ENCODE measurements at regions of chr19 and their contacts with region 1.

Region 1: DNA sequence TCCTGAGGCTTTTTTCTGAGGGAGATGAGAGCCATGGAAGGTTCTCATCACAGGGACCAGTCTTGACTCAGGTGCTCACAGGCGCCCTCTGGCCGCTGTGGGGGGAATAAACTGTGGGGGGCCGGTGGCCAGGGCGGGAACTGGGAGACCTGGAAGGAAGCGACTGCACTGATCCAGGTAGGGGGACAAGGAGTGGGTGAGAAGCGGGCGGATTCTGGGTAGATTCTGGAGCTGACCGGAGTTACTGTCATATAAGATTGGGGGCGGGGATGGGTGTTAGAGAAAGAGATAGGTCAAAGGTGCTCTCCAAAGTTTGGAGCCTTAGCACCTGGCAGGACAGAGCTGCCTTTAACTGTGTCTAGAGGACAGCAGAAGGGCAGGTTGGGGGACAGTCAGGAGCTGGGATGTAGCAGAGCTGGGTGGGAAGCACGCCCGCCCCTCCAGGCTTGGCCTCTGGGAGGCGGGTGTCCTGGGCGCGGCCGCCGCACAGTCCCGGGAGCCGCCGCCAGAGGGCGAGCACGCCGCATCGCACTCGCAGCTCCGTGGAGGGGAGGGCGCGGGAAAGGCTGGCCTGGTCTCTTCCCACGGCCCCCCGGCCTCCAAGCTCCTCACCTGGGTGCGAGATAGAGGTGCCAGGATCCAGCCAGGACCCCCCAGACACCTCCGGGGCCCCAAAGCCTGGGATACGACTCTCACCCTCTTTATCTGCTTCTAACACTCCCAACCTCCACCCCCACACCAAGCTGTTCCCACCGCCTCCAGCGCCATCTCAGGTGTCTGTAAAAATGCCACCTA is 4.2 kb upstream of the DAND5 start:
- DNase-seq: peak; percentile 89
- H3K4me3 ChIP-seq: peak overlapping the region; percentile 48 to 63
- H3K27ac ChIP-seq: peak overlapping the region; percentile 59 to 75
- H3K4me1 ChIP-seq: peaks cover 6 to 14% of the 10 kb centered on the region in 2 experiments; a peak in 3 of 4 replicates
- H3K27me3 ChIP-seq: no peaks in the 10 kb centered on the region
- CTCF ChIP-seq: peak; percentile 78
- EP300 ChIP-seq: no peak
- RAD21 ChIP-seq: peak; percentile 79

Region 2: DNA sequence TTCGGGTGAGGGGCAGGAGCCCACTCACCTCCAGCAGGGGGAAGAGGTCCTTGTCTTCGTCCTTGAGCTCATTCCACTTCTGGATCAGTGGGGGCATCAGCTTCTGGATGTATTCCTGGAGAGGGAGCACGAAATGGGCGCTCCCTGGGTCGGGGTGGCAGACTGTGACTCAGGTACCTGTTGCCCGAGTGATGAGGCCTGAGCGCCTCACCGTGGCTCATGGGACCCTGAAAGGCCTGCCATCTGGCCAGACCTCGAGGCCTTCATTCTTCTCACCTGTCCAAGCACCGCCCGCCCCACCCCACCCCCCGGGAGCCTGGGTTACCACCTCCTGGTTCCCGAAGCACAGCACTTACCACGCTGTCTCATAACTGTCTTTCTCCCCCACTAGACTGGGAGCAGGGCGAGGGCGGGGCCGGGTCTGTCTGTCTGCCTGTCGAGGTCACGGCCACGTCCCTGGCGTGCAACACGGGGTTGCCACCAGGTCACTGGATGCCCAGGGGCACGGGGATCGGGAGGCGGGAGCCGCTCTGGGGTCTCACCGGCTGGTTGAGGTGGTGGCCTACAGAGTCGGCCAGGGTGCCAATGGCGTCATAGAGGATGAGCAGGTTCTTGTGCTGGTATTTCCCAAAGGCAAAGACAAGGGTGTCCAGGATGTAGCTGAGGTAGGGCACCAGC is 259.4 kb before region 1 on chr19:
- CTCF ChIA-PET with region 1: no interaction called
- POLR2A ChIA-PET with region 1: no interaction called
- DNase-seq: no peak
- H3K4me3 ChIP-seq: no peak overlapping the region
- H3K27ac ChIP-seq: no peak overlapping the region
- H3K4me1 ChIP-seq: no peaks in the 10 kb centered on the region
- H3K27me3 ChIP-seq: no peaks in the 10 kb centered on the region
- CTCF ChIP-seq: no peak
- EP300 ChIP-seq: no peak
- RAD21 ChIP-seq: no peak

Region 3: DNA sequence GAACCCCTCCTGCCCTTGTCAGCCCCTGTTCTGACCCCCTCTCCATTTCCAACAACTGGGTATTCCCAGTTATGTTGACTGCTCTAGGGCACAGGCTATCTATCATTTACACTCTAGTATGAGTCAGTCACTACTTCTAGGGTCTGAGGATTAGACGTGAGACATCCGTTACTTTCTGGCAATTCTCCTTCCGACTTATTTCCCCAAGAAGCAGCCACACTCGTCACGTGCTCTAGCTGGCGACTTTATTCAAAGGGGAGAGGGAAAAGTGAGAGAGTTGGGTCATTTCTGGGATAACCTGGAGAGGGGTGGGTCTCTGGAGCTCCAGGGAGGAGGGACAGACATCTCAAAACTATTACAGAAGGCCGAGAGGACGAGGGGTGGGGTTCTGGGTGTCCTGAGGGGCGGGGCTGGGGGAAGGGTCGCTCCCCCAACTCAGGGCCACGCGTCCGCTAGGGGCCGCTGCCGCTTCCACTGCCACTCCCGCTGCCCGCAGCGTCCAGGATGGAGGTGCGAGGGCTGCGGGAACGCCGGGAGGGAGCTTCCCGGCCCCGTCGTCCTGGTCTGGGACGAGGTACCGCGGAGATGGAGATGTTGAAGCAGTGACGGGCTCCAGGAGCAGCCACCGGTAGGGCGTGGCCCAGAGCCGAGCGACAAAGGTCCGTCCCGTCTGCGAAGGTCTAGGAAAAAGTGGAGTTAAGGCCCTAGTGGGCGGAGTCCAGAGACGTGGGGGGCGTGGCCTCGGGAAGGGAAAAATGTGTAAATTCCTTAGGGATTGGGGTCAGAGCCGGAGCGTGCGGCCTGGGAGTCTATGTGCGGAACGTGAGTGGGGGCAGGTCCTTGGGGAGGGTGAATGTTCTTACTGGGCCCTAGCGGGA is 139.7 kb before region 1 on chr19:
- CTCF ChIA-PET with region 1: interaction called, 16 read pairs
- POLR2A ChIA-PET with region 1: no interaction called
- DNase-seq: peak; percentile 88
- H3K4me3 ChIP-seq: peak overlapping the region in 1 of 2 experiments; percentile 15; a peak in 1 of 4 replicates
- H3K27ac ChIP-seq: no peak overlapping the region
- H3K4me1 ChIP-seq: peaks cover 0 to 8% of the 10 kb centered on the region in 2 experiments; a peak in 1 of 4 replicates
- H3K27me3 ChIP-seq: no peaks in the 10 kb centered on the region
- CTCF ChIP-seq: peak; percentile 48
- EP300 ChIP-seq: no peak
- RAD21 ChIP-seq: peak; percentile 36

Region 4: GRCh38 chr19:12945479-12946091 is 19.6 kb before region 1 on chr19 and contains the start of gene RAD23A:
- CTCF ChIA-PET with region 1: interaction called, 20 read pairs
- POLR2A ChIA-PET with region 1: interaction called, 7 read pairs
- DNase-seq: peak; percentile 95
- H3K4me3 ChIP-seq: peak within 1 kb of the TSS; percentile 66 to 73
- H3K27ac ChIP-seq: peak within 1 kb of the TSS; percentile 87 to 92
- H3K4me1 ChIP-seq: peaks cover 3 to 25% of the 10 kb centered on the region in 2 experiments; a peak in 3 of 4 replicates
- H3K27me3 ChIP-seq: no peaks in the 10 kb centered on the region
- CTCF ChIP-seq: no peak
- EP300 ChIP-seq: no peak
- RAD21 ChIP-seq: no peak
- polyA plus RNA-seq, gene RAD23A: 60.4 and 116 TPM in 2 replicates

Region 5: DNA sequence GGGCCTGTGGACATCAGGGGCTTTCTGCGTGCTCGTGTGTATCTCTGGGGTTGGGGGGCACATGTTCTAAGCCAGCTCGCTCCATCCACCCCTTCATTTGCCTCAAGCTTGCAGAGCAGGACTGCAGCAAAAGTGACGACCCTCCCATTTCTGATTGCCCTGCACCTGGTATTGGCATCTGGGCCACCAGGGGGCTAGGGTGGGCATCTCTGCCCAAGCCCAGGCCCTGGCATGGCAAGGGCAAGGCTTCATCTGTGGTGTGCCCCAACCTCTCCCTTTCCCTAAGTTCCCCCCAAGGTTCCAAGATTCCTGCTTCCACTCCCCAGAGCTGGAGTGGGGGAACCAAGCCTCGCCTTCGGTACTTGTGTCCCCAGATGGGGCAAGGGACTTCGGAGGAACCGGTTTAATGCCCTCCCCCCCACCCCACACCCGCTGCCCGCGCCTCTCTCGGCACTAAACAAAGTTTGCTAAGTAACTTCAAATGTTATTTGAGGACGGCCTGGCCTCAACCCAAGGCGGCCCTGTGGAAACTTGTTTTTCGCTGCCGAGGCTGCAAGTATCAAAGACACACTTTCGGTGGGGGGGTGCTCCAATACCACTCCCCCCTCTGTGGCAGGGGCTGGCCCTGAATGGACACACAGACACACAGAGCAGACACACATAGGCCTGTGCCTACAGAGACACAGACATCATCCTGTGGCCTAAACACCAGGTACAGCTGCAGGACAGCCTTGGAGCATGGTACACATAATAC is 42.3 kb after region 1 on chr19:
- CTCF ChIA-PET with region 1: interaction called, 16 read pairs
- POLR2A ChIA-PET with region 1: no interaction called
- DNase-seq: peak; percentile 42
- H3K4me3 ChIP-seq: no peak overlapping the region
- H3K27ac ChIP-seq: no peak overlapping the region
- H3K4me1 ChIP-seq: no peaks in the 10 kb centered on the region
- H3K27me3 ChIP-seq: no peaks in the 10 kb centered on the region
- CTCF ChIP-seq: peak; percentile 20; the same call in 1 of the 2 replicates
- EP300 ChIP-seq: no peak
- RAD21 ChIP-seq: no peak

Region 6: DNA sequence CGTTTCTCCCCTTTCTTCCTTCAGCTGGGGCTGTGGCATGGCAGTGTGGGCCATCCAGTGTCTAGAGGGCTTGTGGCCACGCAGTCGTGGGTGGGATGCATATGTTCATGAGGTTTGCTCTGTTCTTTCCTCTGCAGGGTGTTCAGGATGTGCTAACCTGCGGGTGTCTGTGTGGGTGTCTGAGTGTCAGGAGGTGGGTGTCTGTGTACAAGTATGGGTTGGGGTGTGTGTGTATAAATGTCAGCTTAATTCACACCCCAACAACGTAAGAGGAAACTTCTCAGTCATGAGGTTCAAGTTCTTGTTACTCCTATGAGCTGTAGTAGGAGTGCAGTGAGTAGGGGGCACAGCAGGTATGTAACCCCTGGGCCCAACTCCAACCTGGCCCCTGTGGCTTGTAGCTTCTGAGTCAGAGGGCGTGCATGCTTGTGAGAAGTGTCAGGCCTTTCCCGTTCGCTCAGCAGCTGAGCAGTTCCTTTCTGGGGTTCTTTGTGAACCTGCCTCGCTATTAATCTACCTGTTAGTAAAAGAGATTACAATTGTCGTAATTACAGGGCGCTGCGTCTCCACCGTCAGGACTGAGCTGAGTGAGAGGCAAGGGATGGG is 79.1 kb after region 1 on chr19:
- CTCF ChIA-PET with region 1: interaction called, 14 read pairs
- POLR2A ChIA-PET with region 1: no interaction called
- DNase-seq: no peak
- H3K4me3 ChIP-seq: no peak overlapping the region
- H3K27ac ChIP-seq: no peak overlapping the region
- H3K4me1 ChIP-seq: peaks cover 9 to 24% of the 10 kb centered on the region in 2 experiments; a peak in 2 of 4 replicates
- H3K27me3 ChIP-seq: no peaks in the 10 kb centered on the region
- CTCF ChIP-seq: no peak
- EP300 ChIP-seq: no peak
- RAD21 ChIP-seq: no peak

Region 7: DNA sequence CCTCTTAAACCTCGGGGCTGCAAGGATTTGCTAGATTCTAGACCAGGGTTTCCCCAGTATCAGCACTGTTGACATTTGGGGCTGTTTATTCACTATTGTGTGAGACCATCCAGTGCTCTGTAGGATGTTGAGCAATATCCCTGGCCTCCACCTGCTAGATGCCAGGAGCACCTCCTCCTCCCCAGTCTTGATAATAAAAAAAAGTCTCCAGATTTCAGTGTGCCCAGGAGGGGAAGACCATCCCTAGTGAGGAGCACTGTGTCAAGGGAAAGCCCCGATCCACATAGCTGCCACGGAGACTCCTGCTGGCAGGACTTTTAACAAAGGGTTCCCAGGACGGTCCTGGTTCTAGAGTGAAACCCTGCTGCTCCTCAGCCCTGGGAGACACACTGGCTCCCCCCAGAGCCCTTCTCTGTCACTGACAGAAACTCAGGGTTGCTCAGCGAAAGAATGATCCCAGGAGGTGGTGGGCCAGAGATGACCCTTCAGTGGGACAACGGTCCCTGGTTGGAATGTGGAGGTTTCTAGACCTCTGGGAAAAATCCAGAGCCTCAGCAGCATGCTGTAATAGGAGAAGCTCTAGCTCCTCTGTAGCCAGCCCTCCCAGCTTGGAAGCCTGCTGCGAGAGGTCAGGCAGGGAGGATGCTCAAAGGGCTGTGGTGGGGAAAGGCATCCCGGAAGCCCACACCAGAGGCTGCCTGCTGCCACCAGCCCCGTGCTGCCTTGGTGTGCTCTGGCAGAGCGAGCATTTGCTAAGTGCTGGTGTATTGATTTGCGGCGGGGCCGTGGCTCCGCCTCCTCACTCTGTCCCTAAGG is 117.2 kb after region 1 on chr19:
- CTCF ChIA-PET with region 1: interaction called, 26 read pairs
- POLR2A ChIA-PET with region 1: interaction called, 3 read pairs
- DNase-seq: peak; percentile 66
- H3K4me3 ChIP-seq: no peak overlapping the region
- H3K27ac ChIP-seq: peak overlapping the region in 1 of 2 experiments; percentile 23; a peak in 2 of 4 replicates
- H3K4me1 ChIP-seq: peaks cover 10 to 33% of the 10 kb centered on the region in 2 experiments; a peak in 3 of 4 replicates
- H3K27me3 ChIP-seq: no peaks in the 10 kb centered on the region
- CTCF ChIP-seq: peak; percentile 23
- EP300 ChIP-seq: no peak
- RAD21 ChIP-seq: peak; percentile 61

Region 8: DNA sequence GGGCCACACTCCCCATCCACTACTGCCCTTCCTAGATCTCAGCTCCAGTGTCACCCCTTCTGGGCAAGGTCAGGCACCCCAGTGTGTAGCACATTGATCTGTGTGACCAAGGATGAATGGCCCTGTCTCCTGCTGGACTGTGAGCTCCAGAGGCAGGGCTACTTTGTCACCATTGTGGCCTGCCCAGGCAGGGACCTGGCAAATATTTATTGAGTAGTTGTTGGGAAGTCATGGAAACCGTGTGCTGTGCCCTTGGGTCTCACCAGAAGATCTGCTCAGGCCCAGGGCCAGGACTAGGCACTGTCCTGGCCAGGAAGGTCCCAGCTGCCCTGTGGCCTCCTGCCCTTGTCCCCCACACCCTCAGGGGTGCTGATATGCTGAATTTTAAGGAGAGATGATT is 163.4 kb after region 1 on chr19:
- CTCF ChIA-PET with region 1: interaction called, 10 read pairs
- POLR2A ChIA-PET with region 1: no interaction called
- DNase-seq: no peak
- H3K4me3 ChIP-seq: no peak overlapping the region
- H3K27ac ChIP-seq: no peak overlapping the region
- H3K4me1 ChIP-seq: peaks cover 0 to 15% of the 10 kb centered on the region in 2 experiments; a peak in 2 of 4 replicates
- H3K27me3 ChIP-seq: no peaks in the 10 kb centered on the region
- CTCF ChIP-seq: no peak
- EP300 ChIP-seq: no peak
- RAD21 ChIP-seq: no peak